Adrenal gland (tissue), 19 donors: ENCODE measurements at regions of chr19 and their contacts with region 1.

Region 1: DNA sequence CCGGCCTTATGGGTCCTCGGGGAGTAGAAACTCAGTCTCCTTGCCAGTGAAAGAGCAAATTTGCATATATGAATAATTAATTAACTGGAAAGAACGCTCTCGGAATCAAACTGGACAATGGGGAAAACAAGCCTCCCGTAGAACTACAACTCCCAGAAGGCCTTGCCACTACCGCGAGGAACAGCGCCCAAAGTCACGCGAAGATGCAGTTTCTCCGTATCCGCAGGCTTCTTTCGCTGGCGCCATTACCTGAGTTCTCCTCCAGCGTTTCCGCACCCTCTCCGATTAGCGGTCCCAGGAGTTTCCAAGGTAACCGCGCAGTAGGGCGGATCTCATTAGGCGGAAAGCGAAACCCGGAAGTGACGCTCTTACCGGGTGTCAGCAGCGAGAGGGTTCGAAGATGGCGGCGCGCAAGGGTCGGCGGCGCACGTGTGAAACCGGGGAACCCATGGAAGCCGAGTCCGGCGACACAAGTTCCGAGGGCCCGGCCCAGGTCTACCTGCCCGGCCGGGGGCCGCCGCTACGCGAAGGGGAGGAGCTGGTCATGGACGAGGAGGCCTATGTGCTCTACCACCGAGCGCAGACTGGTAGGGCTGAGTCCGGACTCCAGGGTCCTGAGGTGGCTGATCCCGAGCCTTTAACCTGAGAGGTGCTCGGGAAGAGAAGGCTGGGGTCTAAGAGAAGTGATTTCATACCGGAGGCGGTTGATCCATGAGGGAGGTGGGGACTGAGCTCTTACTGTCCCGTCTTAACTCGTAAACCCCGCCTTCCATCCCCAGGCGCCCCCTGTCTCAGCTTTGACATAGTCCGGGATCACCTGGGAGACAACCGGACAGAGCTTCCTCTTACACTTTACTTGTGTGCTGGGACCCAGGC is at the start of gene GRWD1:
- DNase-seq: peak; percentile 88 to 97 (median 94)
- H3K4me3 ChIP-seq: peak within 1 kb of the TSS; percentile 66 to 100 (median 79)
- H3K27ac ChIP-seq: peak within 1 kb of the TSS; percentile 51 to 91 (median 82)
- H3K4me1 ChIP-seq: peaks cover 5 to 20% of the 10 kb centered on the region in 2 donors
- H3K27me3 ChIP-seq: peaks cover 5% of the 10 kb centered on the region
- CTCF ChIP-seq: no peak
- POLR2A ChIP-seq: peak in 1 of 2 donors; percentile 35
- total RNA-seq, gene GRWD1: 8.5 to 48.4 (median 27.8) TPM

Region 2: DNA sequence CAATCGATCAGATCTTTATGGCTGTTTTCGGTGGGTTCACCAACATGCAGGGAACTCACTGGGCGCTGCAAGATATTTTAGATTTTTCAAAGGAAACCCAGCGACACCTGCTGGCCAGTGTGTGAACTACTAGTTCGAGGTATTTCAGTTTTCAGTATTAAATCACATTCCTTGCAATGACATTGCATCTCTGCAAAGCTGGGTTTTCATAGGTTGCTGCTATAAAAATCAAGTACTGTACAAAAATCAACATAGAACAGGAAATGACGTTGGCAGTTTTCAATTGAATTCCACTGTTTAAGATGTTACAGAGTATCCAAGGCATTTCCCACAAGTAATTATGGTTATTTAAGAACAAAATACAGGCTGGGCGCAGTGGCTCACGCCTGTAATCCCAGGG is 293.3 kb before region 1 on chr19:
- intact Hi-C with region 1: no loop called
- DNase-seq: peak; percentile 40 to 91 (median 62)
- H3K4me3 ChIP-seq: no peak overlapping the region
- H3K27ac ChIP-seq: no peak overlapping the region
- H3K4me1 ChIP-seq: no peaks in the 10 kb centered on the region
- H3K27me3 ChIP-seq: no peaks in the 10 kb centered on the region
- CTCF ChIP-seq: peak; percentile 81 to 93 (median 88)
- POLR2A ChIP-seq: no peak

Region 3: DNA sequence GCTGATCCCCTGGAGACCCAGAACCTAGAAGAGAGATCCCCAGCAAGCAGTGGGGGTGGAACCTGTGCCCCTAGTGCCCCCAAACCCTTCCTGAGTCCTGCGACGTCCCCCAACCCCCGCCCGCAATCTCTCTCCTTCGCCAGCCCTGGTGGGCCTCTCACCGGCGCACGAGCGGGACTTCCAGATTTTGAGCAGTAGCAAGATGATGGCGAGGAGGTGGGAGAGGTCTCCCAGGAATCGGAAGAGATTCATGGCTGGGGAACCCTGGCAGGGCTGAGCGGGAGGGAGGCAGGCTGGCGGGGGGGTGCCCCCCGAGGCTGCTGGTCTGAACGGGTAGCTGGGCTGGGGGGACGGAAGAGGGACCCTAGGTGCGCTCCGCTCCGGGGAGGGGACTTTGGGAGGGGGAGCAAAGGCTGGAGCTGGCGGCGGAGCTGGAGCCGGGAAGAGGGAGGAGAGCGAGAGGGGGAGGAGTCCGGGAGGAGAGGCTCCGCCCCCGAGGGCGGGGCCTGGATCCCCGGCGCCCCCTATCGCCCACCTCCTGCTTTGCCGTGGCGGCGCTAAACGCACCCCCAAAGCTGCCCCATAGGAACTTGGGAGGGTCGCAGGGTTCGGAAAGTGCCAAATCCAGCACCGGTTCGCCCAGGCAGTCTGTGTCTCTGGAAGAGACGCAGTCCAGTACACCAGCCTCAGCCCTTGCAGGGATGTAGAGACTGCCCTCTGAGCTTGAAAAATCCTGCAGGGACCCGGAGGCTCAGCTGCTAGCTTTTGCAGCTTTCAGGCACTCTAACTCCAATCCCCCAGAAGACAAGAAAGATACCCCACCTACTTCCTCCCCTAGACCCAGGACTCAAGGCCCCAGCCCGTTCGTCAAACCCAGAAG is 54.5 kb before region 1 on chr19 and contains the start of gene KDELR1:
- intact Hi-C with region 1: loop called in 1 of 2 experiments (anchors 10 kb)
- DNase-seq: peak; percentile 66 to 84 (median 78)
- H3K4me3 ChIP-seq: peak within 1 kb of the TSS; percentile 68 to 100 (median 88)
- H3K27ac ChIP-seq: peak within 1 kb of the TSS; percentile 79 to 93 (median 89)
- H3K4me1 ChIP-seq: peaks cover 0 to 10% of the 10 kb centered on the region in 2 donors
- H3K27me3 ChIP-seq: peaks cover 30% of the 10 kb centered on the region
- CTCF ChIP-seq: peak; percentile 59 to 79 (median 72)
- POLR2A ChIP-seq: peak in 1 of 2 donors; percentile 37
- total RNA-seq, gene KDELR1: 63.4 to 201 (median 161) TPM